ENCODE measurements at regions of chr4 and their contacts with region 1.

Region 1: DNA sequence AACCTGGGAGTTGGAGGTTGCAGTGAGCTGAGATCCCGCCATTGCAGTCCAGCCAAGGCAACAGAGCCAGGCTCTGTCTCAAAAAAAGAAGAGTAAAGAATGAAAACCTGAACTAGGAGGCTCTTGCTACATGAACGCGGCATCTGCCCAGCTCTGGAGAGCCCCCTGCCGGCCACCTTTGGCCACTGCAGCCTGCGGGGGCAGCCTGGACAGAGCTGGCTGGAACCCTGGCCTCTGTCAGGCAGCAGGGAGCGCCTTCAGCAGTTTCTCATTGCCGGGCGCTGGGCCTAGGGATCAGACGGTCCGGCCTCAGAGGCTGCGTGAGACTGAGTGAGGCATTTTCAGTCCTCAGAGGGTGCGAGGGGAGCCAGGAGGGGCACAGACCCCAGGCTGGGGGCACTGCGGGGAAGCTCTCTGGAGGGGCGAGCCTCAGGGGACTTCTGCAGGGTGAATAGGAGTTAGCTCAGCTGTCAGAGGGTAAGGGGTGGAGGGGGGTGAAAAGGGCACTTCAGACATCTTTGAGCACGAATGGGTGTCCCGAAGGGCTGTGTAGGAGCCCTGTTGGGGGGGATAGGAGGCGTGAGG is 17.5 kb downstream of the DOK7 start:
- DNase-seq: peak; percentile 78 to 93
- ATAC-seq: peak; percentile 78
- H3K4me3 ChIP-seq: no peak overlapping the region
- H3K27ac ChIP-seq: peak overlapping the region in 1 of 2 donors; percentile 6
- H3K4me1 ChIP-seq: no peaks in the 10 kb centered on the region
- H3K27me3 ChIP-seq: no peaks in the 10 kb centered on the region

Region 2: DNA sequence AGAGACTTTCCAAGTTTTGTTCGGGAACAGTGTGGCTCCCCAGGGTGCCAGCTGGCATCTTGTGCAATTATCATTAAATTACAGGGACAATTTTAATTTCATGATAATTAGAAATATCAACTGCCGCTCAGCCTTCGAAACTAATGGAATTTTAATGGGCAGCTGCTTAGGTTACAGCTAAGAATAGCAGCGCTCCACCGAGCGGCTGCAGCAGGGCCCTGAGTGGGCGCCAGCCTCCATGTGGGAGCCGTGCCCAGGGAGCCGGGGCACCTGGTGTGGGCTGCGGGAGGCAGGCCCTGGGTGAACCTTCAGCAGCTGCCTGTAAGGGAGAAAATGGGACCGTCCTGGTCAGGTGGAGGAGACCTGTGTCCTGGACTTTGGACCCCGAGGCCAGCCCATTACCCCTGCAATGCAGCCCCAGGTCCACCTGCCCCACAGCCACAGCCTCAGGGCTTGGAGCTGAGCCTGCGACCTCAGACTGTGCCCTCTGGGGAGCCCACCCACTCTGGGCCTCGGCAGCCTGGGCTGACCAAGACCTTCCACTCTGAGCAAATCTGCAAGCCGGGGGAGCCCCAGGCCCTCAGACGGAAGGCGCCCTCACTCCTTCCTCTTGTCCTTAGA is 210.5 kb before region 1 on chr4:
- intact Hi-C with region 1: no loop called
- DNase-seq: peak in 1 of 2 donors; percentile 44
- ATAC-seq: no peak
- H3K4me3 ChIP-seq: no peak overlapping the region
- H3K27ac ChIP-seq: no peak overlapping the region
- H3K4me1 ChIP-seq: no peaks in the 10 kb centered on the region
- H3K27me3 ChIP-seq: no peaks in the 10 kb centered on the region

Region 3: GRCh38 chr4:3292571-3293400 is 187.8 kb before region 1 on chr4 and contains the start of gene RGS12:
- intact Hi-C with region 1: loop called in 1 of 2 experiments (anchors 5 kb)
- DNase-seq: peak; percentile 97 to 99
- ATAC-seq: peak; percentile 96
- H3K4me3 ChIP-seq: peak within 1 kb of the TSS; percentile 56 to 78
- H3K27ac ChIP-seq: peak within 1 kb of the TSS; percentile 51 to 82
- H3K4me1 ChIP-seq: no peaks in the 10 kb centered on the region
- H3K27me3 ChIP-seq: no peaks in the 10 kb centered on the region
- total RNA-seq, gene RGS12: 23.9 to 40.4 TPM

Region 4: GRCh38 chr4:3531879-3532713 is 51.5 kb after region 1 on chr4 and contains the start of gene LRPAP1:
- intact Hi-C with region 1: loop called in 1 of 2 experiments (anchors 5 kb)
- DNase-seq: peak; percentile 95 to 98
- ATAC-seq: peak; percentile 97
- H3K4me3 ChIP-seq: peak within 1 kb of the TSS; percentile 91 to 98
- H3K27ac ChIP-seq: peak within 1 kb of the TSS in 1 of 2 donors; percentile 41
- H3K4me1 ChIP-seq: no peaks in the 10 kb centered on the region
- H3K27me3 ChIP-seq: no peaks in the 10 kb centered on the region
- total RNA-seq, gene LRPAP1: 128 to 136 TPM

Region 5: GRCh38 chr4:3582091-3582475 is 101.5 kb after region 1 on chr4:
- intact Hi-C with region 1: no loop called
- DNase-seq: peak in 1 of 2 donors; percentile 51
- ATAC-seq: no peak
- H3K4me3 ChIP-seq: no peak overlapping the region
- H3K27ac ChIP-seq: no peak overlapping the region
- H3K4me1 ChIP-seq: no peaks in the 10 kb centered on the region
- H3K27me3 ChIP-seq: no peaks in the 10 kb centered on the region